Activated CD4-positive, alpha-beta T cell treated with anti-CD3 and anti-CD28 coated beads, Interleukin-2, amount 10 ng/mL, durations not matched to agents 24 days and 14 days (primary cell): ENCODE measurements at regions of chr6 and their contacts with region 1.

Region 1: DNA sequence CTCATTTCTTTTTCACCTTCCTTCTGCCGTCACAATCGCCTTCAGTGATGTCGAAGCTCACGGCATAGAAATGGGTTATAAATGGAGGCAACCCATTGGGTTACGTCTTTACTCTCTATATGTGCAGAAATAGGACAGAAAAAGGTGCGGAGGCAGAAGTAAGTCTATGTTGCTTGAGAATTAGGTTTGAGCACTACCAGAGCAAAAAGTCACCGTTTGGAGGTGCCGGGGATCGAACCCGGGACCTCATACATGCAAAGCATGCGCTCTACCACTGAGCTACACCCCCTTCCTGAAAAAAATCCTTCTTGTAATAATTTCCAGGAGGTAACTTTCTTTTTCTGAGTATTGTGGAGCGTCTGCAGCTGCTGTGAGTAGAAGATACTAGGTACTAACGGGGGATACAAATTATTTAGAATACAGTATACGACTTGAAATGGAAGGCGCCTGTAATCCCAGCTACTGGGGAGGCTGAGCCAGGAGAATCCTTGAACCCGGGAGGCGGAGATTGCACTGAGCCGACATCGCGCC is 134.2 kb downstream of the TRIM27 start:
- DNase-seq: peak; percentile 66
- H3K4me3 Mint-ChIP-seq: peak overlapping the region; percentile 81
- H3K27ac Mint-ChIP-seq: peak overlapping the region; percentile 71
- H3K4me1 Mint-ChIP-seq: peaks cover 13% of the 10 kb centered on the region
- H3K27me3 Mint-ChIP-seq: peaks cover 83% of the 10 kb centered on the region

Region 2: GRCh38 chr6:28695715-28696114 is 93.9 kb before region 1 on chr6:
- intact Hi-C with region 1: loop called (anchors 10 kb)
- DNase-seq: no peak
- H3K4me3 Mint-ChIP-seq: no peak overlapping the region
- H3K27ac Mint-ChIP-seq: no peak overlapping the region
- H3K4me1 Mint-ChIP-seq: peaks cover 9% of the 10 kb centered on the region
- H3K27me3 Mint-ChIP-seq: peaks cover 67% of the 10 kb centered on the region